ENCODE measurements at regions of chr10 and their contacts with region 1.

Region 1: GRCh38 chr10:102685566-102685965 is 28.6 kb downstream of the ARL3 start:
- DNase-seq: no peak
- ATAC-seq: no peak
- H3K4me3 ChIP-seq: no peak overlapping the region
- H3K27ac ChIP-seq: no peak overlapping the region
- H3K4me1 ChIP-seq: no peaks in the 10 kb centered on the region
- H3K27me3 ChIP-seq: no peaks in the 10 kb centered on the region
- CTCF ChIP-seq: no peak

Region 2: GRCh38 chr10:102735065-102735562 is 49.5 kb after region 1 on chr10:
- intact Hi-C with region 1: loop called in 1 of 3 experiments (anchors 5 kb)
- DNase-seq: peak in 1 of 6 donors; percentile 33
- ATAC-seq: peak in 3 of 4 donors; percentile 50 to 57 (median 53)
- H3K4me3 ChIP-seq: no peak overlapping the region
- H3K27ac ChIP-seq: no peak overlapping the region
- H3K4me1 ChIP-seq: no peaks in the 10 kb centered on the region
- H3K27me3 ChIP-seq: no peaks in the 10 kb centered on the region
- CTCF ChIP-seq: no peak

Region 3: DNA sequence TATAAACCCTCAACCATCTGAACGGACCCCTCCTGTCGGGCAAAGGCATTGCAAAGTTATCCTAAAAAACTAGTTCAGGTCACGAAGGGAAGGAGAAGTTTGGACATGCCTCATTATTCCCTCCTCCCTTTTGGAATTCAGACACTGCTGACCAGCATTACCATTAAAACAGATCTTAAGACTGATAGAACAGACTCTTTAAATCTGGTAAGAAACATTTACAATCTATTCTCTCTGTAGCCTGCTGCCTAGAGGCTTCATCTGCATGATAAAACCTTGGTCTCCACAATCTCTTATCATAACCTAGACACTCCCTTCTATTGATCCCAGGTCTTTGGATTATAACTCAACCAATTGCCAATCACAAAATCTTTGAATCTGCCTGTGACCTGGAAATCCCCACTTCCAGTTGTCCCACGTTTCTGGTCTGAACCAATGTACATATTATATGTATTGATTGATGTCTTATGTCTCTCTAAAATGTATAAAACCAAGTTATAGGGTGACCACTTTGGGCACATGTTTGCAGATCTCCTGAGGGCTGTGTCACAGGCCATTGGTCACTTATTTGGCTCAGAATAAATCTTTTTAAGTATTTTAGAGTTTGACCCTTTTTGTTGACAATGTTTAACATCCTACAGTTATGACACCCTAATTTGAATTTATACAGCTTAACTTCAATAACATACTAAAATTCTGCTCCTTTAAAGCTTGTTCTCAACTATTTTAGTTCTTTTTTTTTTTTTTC is 209.1 kb after region 1 on chr10:
- intact Hi-C with region 1: no loop called
- DNase-seq: no peak
- ATAC-seq: no peak
- H3K4me3 ChIP-seq: no peak overlapping the region
- H3K27ac ChIP-seq: no peak overlapping the region
- H3K4me1 ChIP-seq: no peaks in the 10 kb centered on the region
- H3K27me3 ChIP-seq: no peaks in the 10 kb centered on the region
- CTCF ChIP-seq: no peak

Region 4: GRCh38 chr10:103007017-103007416 is 321.5 kb after region 1 on chr10:
- intact Hi-C with region 1: no loop called
- DNase-seq: no peak
- ATAC-seq: no peak
- H3K4me3 ChIP-seq: no peak overlapping the region
- H3K27ac ChIP-seq: no peak overlapping the region
- H3K4me1 ChIP-seq: no peaks in the 10 kb centered on the region
- H3K27me3 ChIP-seq: no peaks in the 10 kb centered on the region
- CTCF ChIP-seq: no peak

Region 5: GRCh38 chr10:103507235-103508191 is 821.9 kb after region 1 on chr10:
- intact Hi-C with region 1: no loop called
- DNase-seq: peak in 4 of 6 donors; percentile 51 to 82 (median 70)
- ATAC-seq: peak; percentile 26 to 70 (median 54)
- H3K4me3 ChIP-seq: no peak overlapping the region
- H3K27ac ChIP-seq: peak overlapping the region; percentile 8 to 82 (median 56)
- H3K4me1 ChIP-seq: peaks cover 17 to 23% (median 18%) of the 10 kb centered on the region in 3 donors
- H3K27me3 ChIP-seq: no peaks in the 10 kb centered on the region
- CTCF ChIP-seq: no peak